ENCODE measurements at regions of chr1 and their contacts with region 1.

Region 1: GRCh38 chr1:114979278-114979891 is 50.2 kb upstream of the TSHB start:
- DNase-seq: peak in 1 of 2 donors; percentile 79
- H3K4me3 ChIP-seq: no peak overlapping the region
- H3K27ac ChIP-seq: no peak overlapping the region
- H3K4me1 ChIP-seq: no peaks in the 10 kb centered on the region
- H3K27me3 ChIP-seq: no peaks in the 10 kb centered on the region
- CTCF ChIP-seq: peak; percentile 77 to 79 (median 79)

Region 2: DNA sequence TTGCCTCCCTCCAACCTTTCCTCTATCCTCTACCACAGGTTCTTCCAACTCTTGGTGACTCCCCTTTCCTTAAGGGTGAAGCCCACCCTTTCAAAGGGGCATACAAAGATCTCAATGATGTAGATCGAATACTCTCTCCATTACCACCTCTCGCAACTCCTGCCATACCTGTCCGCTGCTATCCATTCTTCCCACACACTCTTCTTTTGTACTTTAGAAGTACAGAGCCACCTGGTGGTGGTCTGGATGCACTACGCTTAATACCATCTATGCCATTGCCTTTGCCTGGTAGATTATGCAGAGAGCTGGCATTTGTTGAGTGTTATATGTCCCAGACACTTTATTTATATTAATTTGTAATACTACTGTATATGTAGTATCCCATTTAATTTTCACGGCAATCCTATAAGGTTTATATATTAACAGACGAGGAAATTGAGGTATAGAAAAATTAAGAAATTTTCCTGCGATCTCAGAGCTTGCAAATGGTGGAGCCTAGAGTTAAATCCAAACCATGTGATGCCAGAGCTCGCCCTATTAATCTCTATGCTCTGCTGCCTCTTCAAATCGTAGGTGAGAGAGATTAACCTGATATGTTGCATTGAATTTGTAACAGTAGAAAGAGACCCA is 73.2 kb after region 1 on chr1:
- intact Hi-C with region 1: loop called (anchors 5 kb)
- DNase-seq: no peak
- H3K4me3 ChIP-seq: no peak overlapping the region
- H3K27ac ChIP-seq: no peak overlapping the region
- H3K4me1 ChIP-seq: no peaks in the 10 kb centered on the region
- H3K27me3 ChIP-seq: no peaks in the 10 kb centered on the region
- CTCF ChIP-seq: peak; percentile 57 to 86 (median 82)

Region 3: DNA sequence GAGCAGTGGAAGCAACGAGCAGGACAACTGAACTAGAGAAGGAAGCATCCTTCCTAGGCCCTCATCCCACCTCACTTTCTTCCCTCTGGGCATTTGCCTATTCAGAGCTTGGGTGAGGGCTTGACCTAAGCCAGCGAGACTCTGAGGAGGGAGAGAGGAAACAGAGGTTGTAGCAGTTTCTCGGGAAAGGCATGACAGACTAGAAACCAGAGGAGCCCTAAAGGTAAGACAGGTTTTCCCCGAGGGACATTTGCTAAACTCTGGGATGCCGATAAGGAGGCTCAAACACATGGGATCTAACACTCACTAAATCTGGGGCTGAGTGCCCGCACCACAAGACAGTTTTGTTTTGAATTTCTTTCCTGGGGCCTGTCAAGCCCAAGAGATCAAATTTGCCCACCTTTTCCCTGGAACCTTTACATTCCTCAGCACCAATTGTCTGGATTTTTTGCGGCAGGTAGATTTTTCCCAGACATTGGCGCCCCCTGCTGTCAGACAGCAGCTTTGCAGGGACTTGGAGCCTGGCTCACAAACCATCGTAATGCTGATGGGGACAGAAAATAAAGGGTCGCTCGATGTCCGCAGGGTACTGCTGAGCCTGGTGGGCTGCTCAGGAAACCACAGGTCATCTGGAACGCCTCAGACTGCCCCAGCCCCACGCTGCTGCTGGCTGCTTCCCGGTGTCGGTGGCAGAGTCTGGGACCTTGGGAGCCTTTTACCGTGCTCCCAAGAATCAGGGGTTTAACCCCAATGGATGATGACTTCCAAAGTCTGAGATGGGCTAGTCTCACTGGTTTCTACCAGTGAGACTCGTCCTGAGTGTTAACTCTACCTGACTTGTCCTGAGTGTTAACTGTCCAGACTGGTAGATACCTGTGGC is 133.4 kb after region 1 on chr1:
- intact Hi-C with region 1: loop called (anchors 1 kb)
- DNase-seq: no peak
- H3K4me3 ChIP-seq: no peak overlapping the region
- H3K27ac ChIP-seq: no peak overlapping the region
- H3K4me1 ChIP-seq: peaks cover 0 to 5% of the 10 kb centered on the region in 2 donors
- H3K27me3 ChIP-seq: no peaks in the 10 kb centered on the region
- CTCF ChIP-seq: peak; percentile 86 to 94 (median 93)

Region 4: GRCh38 chr1:115469703-115470476 is 490.5 kb after region 1 on chr1:
- intact Hi-C with region 1: loop called (anchors 5 kb)
- DNase-seq: no peak
- H3K4me3 ChIP-seq: no peak overlapping the region
- H3K27ac ChIP-seq: no peak overlapping the region
- H3K4me1 ChIP-seq: no peaks in the 10 kb centered on the region
- H3K27me3 ChIP-seq: no peaks in the 10 kb centered on the region
- CTCF ChIP-seq: peak; percentile 73 to 90 (median 81)

Region 5: GRCh38 chr1:115595279-115596079 is 616.1 kb after region 1 on chr1:
- intact Hi-C with region 1: loop called (anchors 2 kb)
- DNase-seq: peak; percentile 12 to 92
- H3K4me3 ChIP-seq: no peak overlapping the region
- H3K27ac ChIP-seq: no peak overlapping the region
- H3K4me1 ChIP-seq: peaks cover 0 to 2% of the 10 kb centered on the region in 2 donors
- H3K27me3 ChIP-seq: no peaks in the 10 kb centered on the region
- CTCF ChIP-seq: peak; percentile 87 to 92 (median 87)

Measured in ascending aorta (tissue), 2 donors.